ENCODE measurements at regions of chr1 and their contacts with region 1.

Region 1: DNA sequence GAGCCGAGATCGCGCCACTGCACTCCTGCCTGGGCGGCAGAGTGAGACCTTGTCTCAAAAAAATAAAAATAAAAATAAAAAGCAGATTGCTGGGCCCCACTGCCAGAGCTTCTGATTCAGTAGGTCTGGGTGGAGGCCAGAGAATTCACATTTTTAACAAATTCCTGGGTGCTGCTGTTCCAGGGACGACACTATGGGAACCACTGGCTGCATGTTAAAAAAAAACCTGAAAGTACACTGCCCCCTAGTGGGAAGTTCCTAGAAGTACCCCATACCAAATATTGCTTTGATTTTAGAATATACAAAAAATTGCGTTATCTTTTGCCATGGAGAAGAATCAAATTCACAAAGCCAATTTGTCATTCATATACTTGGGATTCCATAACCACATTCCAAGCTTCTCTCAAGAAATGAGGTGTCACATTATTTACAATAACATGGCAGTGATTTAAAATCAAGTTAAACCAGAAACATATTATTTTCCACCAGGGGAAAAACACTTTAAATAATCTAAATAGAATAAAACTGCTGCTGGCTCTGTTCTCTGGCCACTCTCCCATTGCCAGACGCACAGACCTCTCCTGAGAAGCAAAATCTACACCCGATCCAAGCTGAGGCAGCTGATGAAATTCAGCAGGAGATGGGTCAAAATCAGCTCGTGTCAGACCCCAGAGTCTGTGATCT is 27.4 kb downstream of the SYF2 start:
- DNase-seq: peak; percentile 59
- H3K4me3 ChIP-seq: no peak overlapping the region
- CTCF ChIP-seq: peak; percentile 50

Region 2: DNA sequence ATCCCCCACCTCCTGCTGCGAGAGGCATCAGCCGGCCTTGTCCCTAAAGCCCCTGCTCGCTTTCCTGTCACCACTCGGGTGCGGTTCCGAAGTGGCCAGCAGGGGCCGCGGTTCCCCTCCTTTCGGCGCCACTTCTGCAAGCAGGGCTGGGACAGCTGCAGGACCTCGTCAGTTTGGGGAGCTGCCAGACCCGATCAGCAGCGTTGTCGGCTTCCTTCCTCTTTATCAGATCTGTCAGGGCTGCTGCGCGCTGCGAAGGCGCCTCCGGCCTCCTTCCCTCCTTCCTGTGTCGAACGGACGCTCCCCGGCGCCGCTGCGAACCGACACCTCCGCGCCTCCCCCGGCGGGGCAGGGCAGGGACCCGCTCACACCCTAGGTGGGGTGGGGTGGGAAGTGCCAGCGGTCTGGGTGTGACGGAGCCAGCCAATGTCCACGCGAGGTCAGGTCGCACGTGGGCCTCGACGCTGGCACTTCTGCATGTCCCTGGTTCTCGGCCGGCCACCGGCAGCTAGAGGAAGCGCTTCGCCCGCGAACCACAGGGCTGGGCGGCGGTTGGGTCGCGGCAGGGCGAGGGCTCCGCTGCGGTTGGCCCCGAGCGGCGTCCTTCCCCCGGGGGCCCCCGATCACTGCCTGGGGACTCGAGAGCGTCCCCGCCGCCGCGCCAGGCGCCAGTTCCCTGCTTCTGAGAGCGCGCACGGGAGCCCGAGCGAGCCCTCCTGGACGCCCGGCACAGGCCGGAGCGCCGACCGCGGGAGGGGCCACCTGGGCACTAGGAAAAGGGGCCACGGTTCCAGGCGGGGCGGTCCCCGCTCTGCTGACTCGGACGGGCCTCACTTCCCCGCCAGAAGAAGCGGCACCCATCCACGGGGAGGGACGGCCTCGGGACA is 356.7 kb before region 1 on chr1:
- CTCF ChIA-PET with region 1: interaction called, 44 read pairs
- POLR2A ChIA-PET with region 1: no interaction called
- DNase-seq: peak; percentile 42
- H3K4me3 ChIP-seq: peak overlapping the region; percentile 54
- CTCF ChIP-seq: peak; percentile 94

Region 3: DNA sequence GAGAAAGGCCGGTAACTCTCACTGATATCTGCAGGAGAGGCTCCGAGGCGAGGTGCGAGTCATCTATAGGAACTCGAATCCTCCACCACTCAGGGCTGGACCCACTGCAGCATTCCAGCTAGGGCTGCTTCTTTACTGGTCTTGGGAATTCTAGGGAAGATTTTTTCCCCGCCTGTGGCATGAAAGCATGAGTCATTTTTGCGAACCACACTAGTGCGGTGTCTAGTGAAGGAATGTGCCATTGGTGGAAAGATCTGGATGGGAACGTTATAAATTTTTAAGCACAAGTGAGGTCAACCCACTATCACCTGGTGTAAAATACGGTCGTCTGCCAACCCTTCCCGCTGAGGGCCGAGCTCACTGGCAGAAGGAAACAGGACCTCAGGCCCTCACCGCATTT is 22.3 kb before region 1 on chr1:
- CTCF ChIA-PET with region 1: interaction called, 15 read pairs
- POLR2A ChIA-PET with region 1: no interaction called
- DNase-seq: peak; percentile 59
- H3K4me3 ChIP-seq: no peak overlapping the region
- CTCF ChIP-seq: no peak

Region 4: DNA sequence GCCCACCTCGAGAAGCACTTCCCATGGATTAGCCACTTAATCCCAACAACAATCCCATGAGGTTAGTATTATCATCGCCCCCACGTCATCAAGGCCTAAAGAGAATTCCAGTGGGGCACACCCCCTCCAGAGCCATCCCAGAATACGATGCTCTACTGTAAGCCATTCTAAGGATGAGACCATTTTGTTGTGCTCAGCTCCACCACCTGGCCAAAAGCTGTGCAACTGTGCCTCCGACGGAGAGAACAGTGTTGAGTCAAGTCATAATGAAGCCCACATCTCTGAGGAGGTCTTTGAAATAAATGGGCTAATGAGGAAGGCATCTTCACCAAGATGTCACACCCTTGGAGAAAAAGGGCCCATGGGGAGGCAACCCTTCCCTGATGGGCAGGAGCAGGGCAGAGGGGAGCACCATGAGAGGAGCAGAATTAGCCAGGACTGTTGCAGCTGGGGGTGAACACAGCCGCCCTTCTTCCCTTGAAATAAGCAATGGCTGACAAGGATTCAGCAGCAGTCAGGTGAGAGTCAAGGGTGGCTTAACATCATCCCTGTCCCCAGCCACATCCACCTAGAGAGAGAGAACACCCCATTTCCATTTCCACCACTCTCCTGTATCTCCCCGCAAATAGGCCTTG is 12.8 kb after region 1 on chr1:
- CTCF ChIA-PET with region 1: interaction called, 69 read pairs
- POLR2A ChIA-PET with region 1: no interaction called
- DNase-seq: no peak
- H3K4me3 ChIP-seq: no peak overlapping the region
- CTCF ChIP-seq: no peak

Region 5: GRCh38 chr1:25232027-25232865 is 27.3 kb after region 1 on chr1 and contains the start of gene SYF2:
- CTCF ChIA-PET with region 1: interaction called, 17 read pairs
- POLR2A ChIA-PET with region 1: interaction called, 4 read pairs
- DNase-seq: peak; percentile 62
- H3K4me3 ChIP-seq: peak within 1 kb of the TSS; percentile 99
- CTCF ChIP-seq: no peak